ENCODE measurements at regions of chr12 and their contacts with region 1.

Region 1: GRCh38 chr12:123389560-123390351 is 5.8 kb downstream of the KMT5A start:
- DNase-seq: peak in 1 of 2 donors; percentile 75
- H3K4me3 ChIP-seq: peak overlapping the region; percentile 59 to 83
- H3K27ac ChIP-seq: peak overlapping the region; percentile 90 to 92
- H3K4me1 ChIP-seq: peaks cover 0 to 61% (median 37%) of the 10 kb centered on the region in 4 donors
- H3K27me3 ChIP-seq: no peaks in the 10 kb centered on the region
- CTCF ChIP-seq: no peak

Region 2: GRCh38 chr12:123468562-123469185 is 78.9 kb after region 1 on chr12:
- intact Hi-C with region 1: no loop called
- DNase-seq: no peak
- H3K4me3 ChIP-seq: no peak overlapping the region
- H3K27ac ChIP-seq: no peak overlapping the region
- H3K4me1 ChIP-seq: peaks cover 0 to 33% (median 15%) of the 10 kb centered on the region in 4 donors
- H3K27me3 ChIP-seq: no peaks in the 10 kb centered on the region
- CTCF ChIP-seq: no peak

Region 3: DNA sequence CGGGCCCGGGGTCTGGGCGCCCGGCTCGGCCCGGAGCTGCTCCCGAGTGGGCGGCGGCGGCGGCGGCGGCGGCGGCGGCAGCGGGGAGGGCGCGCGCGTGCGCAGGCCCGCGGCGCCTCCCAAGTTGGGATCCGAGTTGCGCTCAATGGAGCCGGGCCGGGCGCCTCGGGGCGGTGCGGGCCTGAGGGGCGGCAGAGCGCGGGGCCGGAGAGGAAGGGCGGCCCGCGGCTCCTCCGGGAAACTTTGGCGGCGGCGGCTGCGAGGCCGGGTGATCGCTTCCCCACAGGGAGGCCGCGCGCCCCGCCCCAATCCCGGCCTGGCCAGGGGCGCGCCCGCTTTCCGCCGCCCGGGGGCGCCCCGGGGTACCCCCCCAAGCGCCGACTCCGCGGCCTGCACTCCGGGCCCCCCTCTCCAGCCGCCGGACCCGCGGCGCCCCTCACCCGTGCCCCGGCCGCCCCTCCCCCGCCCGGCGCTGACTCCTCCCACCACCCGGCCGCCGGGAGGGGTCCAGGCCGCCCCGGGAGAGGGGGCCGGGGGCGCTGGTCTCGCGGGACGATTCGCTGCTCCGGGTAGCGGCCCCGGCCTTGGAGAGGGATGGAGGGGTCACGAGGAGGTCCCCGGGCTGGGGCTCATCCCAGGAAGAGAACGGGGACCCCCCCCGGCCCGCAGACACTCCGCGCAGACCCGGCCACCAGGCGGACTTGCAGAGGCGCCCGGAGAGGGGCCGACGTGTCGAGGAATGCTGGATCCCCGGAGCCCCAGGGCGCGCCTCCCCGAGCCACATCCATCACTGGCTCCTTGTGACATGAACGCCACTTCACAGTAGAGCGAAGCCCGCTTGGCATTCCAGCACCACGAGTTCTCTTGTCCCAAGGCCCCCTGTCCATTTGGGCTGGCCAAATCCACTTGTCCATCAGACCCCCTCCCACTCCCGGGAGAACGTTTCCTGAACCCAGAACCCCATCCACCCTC is 144.2 kb after region 1 on chr12 and contains the start of gene RILPL1:
- intact Hi-C with region 1: loop called (anchors 10 kb)
- DNase-seq: peak; percentile 36 to 75
- H3K4me3 ChIP-seq: peak within 1 kb of the TSS; percentile 75 to 93
- H3K27ac ChIP-seq: peak within 1 kb of the TSS; percentile 92 to 96
- H3K4me1 ChIP-seq: peaks cover 0 to 38% (median 34%) of the 10 kb centered on the region in 4 donors
- H3K27me3 ChIP-seq: no peaks in the 10 kb centered on the region
- CTCF ChIP-seq: peak; percentile 28 to 45